ENCODE measurements at regions of chr15 and their contacts with region 1.

Region 1: DNA sequence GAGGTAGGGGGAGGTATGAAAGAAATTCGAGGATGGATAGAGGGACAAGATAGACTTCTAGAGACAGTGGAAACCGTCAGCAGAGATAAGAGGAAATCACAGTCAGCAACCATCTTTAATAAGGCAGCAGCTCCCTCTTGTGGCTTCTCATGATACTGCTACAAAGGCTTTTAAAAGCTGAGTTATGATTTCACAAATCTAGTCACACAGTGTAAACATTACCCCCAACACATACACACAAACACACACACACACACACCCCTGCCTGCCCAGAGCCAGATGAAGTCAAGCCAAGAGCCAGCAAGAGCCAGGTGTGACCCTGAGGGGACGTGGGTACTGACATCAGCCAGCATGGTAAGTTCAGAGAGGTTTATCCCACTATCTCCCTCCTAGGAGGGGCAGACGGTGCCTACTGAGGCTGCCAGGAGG is 18.9 kb upstream of the TGM5 start:
- DNase-seq: peak; percentile 19
- H3K4me3 ChIP-seq: no peak overlapping the region
- H3K27me3 ChIP-seq: peaks cover 8% of the 10 kb centered on the region
- CTCF ChIP-seq: peak; percentile 75

Region 2: DNA sequence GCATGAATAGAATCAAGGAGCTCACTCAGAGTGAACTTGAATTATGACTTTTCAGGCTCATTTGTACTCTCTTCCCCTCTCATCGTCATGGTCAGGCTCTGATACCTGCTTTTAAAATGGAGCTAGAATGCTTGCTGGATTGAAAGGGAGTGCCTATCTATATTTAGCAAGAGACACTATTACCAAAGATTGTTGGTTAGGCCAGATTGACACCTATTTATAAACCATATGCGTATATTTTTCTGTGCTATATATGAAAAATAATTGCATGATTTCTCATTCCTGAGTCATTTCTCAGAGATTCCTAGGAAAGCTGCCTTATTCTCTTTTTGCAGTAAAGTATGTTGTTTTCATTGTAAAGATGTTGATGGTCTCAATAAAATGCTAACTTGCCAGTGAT is 90.8 kb before region 1 on chr15:
- CTCF ChIA-PET with region 1: interaction called, 17 read pairs
- POLR2A ChIA-PET with region 1: no interaction called
- DNase-seq: no peak
- H3K4me3 ChIP-seq: no peak overlapping the region
- H3K27me3 ChIP-seq: no peaks in the 10 kb centered on the region
- CTCF ChIP-seq: no peak

Region 3: DNA sequence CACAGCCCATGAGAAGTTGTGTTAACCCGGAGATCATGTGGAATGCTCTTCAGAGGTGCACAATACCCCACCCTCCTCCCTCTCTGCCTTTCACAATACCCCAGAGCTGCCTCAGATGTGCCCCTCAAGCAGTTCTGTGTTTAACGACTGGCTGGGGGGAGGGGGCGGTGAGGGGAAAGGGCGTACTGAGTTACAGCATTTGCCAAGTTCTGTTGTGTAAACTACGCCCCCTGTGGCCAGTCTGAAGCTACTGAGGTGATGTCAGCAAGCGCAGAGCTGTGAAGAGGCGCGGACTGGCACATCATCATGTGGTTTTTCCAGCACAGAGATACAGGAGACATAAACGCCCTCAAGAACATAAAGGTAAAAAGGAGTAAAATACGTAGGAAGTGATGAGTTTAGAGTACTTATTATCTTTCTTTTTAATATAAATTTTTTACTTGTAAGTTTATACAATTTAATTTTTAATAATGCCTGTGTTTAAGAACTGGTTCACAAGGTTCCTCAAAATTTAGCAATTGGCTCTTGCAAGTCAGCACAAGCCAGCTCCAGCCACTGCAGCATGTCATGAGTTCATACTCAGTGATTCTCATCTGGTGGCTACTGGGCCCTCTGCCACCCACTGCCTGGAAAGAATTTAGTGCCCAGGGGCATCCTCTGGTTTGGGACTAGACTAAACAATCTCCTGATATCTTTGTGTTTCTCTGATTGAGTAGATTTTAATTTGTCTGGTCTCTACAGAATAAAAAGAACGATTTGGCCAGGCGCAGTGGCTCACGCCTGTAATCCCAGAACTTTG is 66.5 kb before region 1 on chr15:
- CTCF ChIA-PET with region 1: interaction called, 127 read pairs
- POLR2A ChIA-PET with region 1: no interaction called
- DNase-seq: no peak
- H3K4me3 ChIP-seq: no peak overlapping the region
- H3K27me3 ChIP-seq: peaks cover 8% of the 10 kb centered on the region
- CTCF ChIP-seq: peak; percentile 34

Region 4: DNA sequence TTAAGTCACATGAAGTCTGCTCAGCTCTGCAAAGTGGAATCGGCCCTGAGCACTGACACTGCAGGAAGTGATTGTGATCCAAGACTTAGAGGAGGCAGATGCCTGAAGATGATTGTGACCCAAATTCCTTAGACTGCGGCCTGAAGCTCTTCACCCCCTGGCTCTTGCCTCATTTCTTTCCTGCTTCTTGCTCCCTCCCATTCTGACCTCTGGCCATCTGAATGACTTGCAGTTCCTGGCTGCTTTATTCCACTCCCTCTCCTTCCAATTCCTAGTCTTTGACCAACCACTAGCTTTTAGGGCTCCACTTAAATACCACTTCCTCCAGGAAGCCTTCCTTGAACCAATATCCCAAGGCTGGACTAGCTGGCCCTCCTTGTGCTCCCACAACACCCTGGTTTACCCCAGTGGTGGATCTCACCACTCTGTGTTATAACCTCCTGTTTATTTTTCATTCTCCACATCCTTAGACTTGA is 54.9 kb before region 1 on chr15:
- CTCF ChIA-PET with region 1: interaction called, 127 read pairs
- POLR2A ChIA-PET with region 1: no interaction called
- DNase-seq: no peak
- H3K4me3 ChIP-seq: no peak overlapping the region
- H3K27me3 ChIP-seq: peaks cover 11% of the 10 kb centered on the region
- CTCF ChIP-seq: no peak

Region 5: GRCh38 chr15:43274136-43274535 is 11.5 kb before region 1 on chr15:
- CTCF ChIA-PET with region 1: interaction called, 35 read pairs
- POLR2A ChIA-PET with region 1: no interaction called
- DNase-seq: no peak
- H3K4me3 ChIP-seq: no peak overlapping the region
- H3K27me3 ChIP-seq: peaks cover 10% of the 10 kb centered on the region
- CTCF ChIP-seq: no peak

Measured in BJ (cell line).